ENCODE measurements at regions of chr17 and their contacts with region 1.

Region 1: DNA sequence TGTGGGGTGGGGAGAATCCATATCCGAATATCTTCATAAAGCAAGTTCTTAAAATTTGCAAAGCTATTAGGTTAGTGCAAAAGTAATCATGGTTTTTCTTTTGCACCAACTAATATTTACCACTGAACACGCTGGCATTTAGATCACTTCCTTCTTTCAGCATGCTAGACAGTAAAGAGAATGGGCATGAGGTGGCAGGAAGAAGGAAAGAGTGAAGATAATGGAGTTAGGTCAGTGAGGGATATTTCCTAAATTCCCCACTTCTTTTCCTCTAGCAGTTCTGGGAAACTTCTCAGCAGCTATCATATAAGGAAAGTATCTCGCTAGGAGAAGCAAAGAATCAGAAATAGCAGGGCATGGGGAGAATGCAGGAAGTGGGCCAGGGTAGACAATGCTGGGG is 39.0 kb downstream of the SLC6A4 start:
- DNase-seq: no peak
- ATAC-seq: no peak
- H3K4me3 ChIP-seq: no peak overlapping the region
- H3K27ac ChIP-seq: no peak overlapping the region
- H3K4me1 ChIP-seq: no peaks in the 10 kb centered on the region
- H3K27me3 ChIP-seq: no peaks in the 10 kb centered on the region
- CTCF ChIP-seq: no peak
- POLR2A ChIP-seq: no peak

Region 2: DNA sequence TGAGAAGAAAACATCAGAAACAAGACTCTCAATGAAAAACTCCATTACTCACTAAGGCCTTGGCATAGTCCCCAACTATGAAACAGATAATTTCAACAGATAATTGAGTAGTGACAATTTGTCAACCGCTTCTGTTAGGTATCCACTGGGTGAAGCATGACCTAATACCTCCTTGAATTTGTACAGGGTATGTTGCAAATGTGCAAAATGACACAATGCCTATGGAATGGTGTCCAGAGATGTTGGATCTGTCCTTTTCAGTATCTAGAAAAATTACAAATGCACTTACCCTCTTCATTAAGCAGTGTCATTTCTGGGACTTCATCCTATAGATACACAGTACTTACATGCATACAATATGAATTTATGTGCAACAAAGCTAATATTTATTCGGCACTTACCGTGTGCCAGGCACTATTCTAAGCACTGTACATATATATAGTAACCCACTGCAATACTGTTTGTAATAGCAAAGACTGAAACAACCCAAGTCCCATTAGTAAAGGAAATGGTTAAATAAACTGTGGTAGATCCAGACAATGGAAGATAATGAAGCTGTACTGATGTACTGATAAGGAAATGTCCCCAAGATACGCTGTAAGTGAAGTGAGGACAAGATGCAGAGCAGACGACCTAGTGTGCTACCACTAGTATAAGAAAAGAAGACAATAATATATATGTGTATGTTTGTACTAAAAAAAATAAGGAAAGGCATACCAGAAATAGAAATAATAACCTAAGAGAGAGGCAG is 60.4 kb after region 1 on chr17:
- intact Hi-C with region 1: loop called in 1 of 10 experiments (anchors 10 kb)
- DNase-seq: no peak
- ATAC-seq: peak in 1 of 4 donors; percentile 50
- H3K4me3 ChIP-seq: no peak overlapping the region
- H3K27ac ChIP-seq: no peak overlapping the region
- H3K4me1 ChIP-seq: peaks cover 0 to 19% (median 0%) of the 10 kb centered on the region in 12 donors
- H3K27me3 ChIP-seq: no peaks in the 10 kb centered on the region
- CTCF ChIP-seq: no peak
- POLR2A ChIP-seq: no peak

Region 3: GRCh38 chr17:30291543-30292285 is 95.2 kb after region 1 on chr17 and contains the start of gene BLMH:
- intact Hi-C with region 1: no loop called
- DNase-seq: peak; percentile 87 to 91 (median 89)
- ATAC-seq: peak; percentile 86 to 99 (median 96)
- H3K4me3 ChIP-seq: peak within 1 kb of the TSS; percentile 72 to 99 (median 90)
- H3K27ac ChIP-seq: peak within 1 kb of the TSS in 11 of 12 donors; percentile 56 to 85 (median 79)
- H3K4me1 ChIP-seq: peaks cover 0 to 23% (median 10%) of the 10 kb centered on the region in 12 donors
- H3K27me3 ChIP-seq: no peaks in the 10 kb centered on the region
- CTCF ChIP-seq: no peak
- POLR2A ChIP-seq: peak in 1 of 2 donors; percentile 81
- total RNA-seq, gene BLMH: 11.1 to 26.2 (median 15.4) TPM

Region 4: GRCh38 chr17:30549864-30550511 is 353.5 kb after region 1 on chr17:
- intact Hi-C with region 1: no loop called
- DNase-seq: no peak
- ATAC-seq: no peak
- H3K4me3 ChIP-seq: no peak overlapping the region
- H3K27ac ChIP-seq: no peak overlapping the region
- H3K4me1 ChIP-seq: no peaks in the 10 kb centered on the region
- H3K27me3 ChIP-seq: no peaks in the 10 kb centered on the region
- CTCF ChIP-seq: no peak
- POLR2A ChIP-seq: no peak

Measured in heart left ventricle (tissue), 16 donors.